ENCODE measurements at regions of chr3 and their contacts with region 1.

Region 1: DNA sequence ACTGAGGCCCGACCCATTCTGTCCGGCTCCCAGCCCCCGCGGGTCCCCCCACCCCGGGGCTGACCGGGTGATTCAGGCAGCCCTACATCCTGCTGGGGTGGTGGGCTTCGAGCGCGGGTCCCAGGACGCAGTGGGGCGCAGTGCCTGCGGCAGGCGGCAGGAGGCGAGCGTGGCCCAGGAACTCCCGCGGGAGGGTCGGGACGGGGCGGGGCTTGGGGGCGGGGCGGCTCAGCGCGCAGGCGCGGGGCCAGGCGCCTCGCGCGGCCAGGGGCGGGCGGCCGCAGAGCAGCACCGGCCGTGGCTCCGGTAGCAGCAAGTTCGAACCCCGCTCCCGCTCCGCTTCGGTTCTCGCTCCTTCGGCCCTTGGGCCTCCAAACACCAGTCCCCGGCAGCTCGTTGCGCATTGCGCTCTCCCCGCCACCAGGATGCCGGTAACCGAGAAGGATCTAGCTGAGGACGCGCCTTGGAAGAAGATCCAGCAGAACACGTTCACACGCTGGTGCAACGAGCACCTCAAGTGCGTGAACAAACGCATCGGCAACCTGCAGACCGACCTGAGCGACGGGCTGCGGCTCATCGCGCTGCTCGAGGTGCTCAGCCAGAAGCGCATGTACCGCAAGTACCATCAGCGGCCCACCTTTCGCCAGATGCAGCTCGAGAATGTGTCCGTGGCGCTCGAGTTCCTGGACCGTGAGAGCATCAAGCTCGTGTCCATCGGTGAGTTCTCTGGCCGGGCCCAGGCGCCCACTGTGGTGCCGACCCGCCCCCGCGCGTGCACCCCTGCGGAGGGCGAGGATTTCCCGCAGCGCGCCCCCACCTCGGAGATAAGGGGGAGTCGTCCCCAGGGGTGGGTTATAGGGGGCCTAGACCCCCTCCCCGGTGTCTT is at the start of gene FLNB:
- DNase-seq: peak; percentile 81
- H3K4me3 Mint-ChIP-seq: peak within 1 kb of the TSS; percentile 92
- H3K27ac Mint-ChIP-seq: peak within 1 kb of the TSS; percentile 74
- H3K4me1 Mint-ChIP-seq: peaks cover 37% of the 10 kb centered on the region
- H3K27me3 Mint-ChIP-seq: no peaks in the 10 kb centered on the region
- total RNA-seq, gene FLNB: 47.7 to 48.0 TPM

Region 2: DNA sequence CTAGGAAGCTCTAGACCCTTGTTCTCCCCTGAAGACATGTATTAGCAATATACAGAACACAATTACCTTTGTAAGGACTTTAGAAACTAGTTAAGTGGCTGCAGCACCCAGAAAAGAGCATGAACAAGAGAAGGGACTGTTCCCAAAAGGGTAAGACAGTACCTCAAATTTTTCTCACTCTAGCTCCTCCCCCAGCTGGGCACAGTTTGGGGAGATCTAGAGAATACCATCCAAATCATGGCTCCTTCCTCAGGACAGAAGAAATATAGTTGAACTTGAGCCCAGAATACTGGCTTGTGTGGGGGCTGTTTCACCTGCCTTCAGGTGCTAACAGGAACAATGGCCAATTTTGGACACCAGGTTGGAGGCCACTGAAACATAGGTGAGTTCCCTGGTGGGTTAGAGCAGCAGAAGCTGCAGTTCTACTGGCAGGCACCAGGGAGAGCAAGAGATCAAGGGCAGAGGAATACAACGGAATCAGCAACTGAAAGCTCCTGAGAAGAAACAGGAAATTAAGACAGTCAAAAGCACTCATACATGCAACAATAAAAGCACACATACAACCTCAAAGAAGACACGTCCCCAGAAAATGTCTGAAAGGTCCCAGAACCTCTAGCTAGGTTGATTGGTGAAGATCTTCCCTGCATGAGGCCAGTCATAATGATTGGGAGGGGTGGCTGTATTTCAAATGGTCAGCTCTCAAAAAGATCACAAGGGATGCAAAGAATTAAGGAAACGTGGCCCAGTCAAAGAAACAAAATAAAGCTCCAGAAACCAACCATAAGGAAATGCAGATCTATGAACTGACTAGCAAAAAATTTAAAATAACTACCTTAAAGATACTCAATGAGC is 611.0 kb before region 1 on chr3:
- CTCF ChIA-PET with region 1: no interaction called
- intact Hi-C with region 1: no loop called
- DNase-seq: peak; percentile 77
- H3K4me3 Mint-ChIP-seq: no peak overlapping the region
- H3K27ac Mint-ChIP-seq: peak overlapping the region; percentile 20
- H3K4me1 Mint-ChIP-seq: peaks cover 11% of the 10 kb centered on the region
- H3K27me3 Mint-ChIP-seq: no peaks in the 10 kb centered on the region

Region 3: GRCh38 chr3:58018892-58019742 is 10.7 kb after region 1 on chr3:
- CTCF ChIA-PET with region 1: interaction called, 15 read pairs
- intact Hi-C with region 1: loop called (anchors 1 kb)
- DNase-seq: no peak
- H3K4me3 Mint-ChIP-seq: no peak overlapping the region
- H3K27ac Mint-ChIP-seq: peak overlapping the region; percentile 8
- H3K4me1 Mint-ChIP-seq: peaks cover 60% of the 10 kb centered on the region
- H3K27me3 Mint-ChIP-seq: no peaks in the 10 kb centered on the region

Region 4: GRCh38 chr3:58073301-58074108 is 65.1 kb after region 1 on chr3:
- CTCF ChIA-PET with region 1: interaction called, 6 read pairs
- intact Hi-C with region 1: loop called (anchors 2 kb)
- DNase-seq: peak; percentile 32
- H3K4me3 Mint-ChIP-seq: no peak overlapping the region
- H3K27ac Mint-ChIP-seq: peak overlapping the region; percentile 44
- H3K4me1 Mint-ChIP-seq: peaks cover 42% of the 10 kb centered on the region
- H3K27me3 Mint-ChIP-seq: no peaks in the 10 kb centered on the region

Region 5: DNA sequence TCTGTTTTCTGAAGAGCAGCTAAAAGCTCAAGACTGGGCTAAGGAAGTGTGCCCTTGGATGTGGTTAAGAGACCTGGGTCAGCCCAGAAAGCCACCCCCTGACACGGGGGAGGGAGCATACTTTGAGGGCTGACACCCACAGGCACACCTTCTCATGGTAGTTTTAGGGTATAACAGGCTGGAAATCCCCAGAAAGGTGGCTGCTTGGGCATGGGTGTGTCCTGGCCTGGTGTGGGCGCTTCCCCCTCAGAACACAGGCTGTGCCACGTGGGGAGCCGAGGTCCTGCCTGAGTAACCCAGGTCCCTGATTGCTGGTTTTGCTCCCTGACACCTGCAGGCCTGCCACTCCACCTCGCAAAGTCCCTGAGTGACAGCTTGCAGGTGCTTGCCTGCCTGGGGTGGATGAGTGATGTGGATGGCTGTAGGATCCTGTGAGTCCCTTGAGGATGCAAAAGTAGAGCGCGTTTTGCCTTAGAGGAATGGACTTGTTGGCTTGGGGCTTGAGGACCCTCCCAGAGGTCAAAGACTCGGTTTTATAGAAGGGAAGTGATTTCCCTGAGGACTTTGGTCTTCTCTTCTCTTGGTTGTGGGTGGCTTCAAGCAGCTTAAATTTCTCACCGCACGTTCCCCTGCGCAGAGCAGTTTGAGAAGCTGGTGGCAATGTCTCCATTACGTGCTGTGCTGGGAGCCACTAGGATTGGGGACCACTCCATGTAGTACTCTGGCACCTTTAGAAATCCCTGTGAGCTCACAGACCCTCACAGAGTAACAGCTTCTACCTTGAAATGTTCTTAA is 108.0 kb after region 1 on chr3:
- CTCF ChIA-PET with region 1: no interaction called
- intact Hi-C with region 1: loop called (anchors 1 kb)
- DNase-seq: peak; percentile 51
- H3K4me3 Mint-ChIP-seq: no peak overlapping the region
- H3K27ac Mint-ChIP-seq: peak overlapping the region; percentile 27
- H3K4me1 Mint-ChIP-seq: peaks cover 26% of the 10 kb centered on the region
- H3K27me3 Mint-ChIP-seq: no peaks in the 10 kb centered on the region

Region 6: DNA sequence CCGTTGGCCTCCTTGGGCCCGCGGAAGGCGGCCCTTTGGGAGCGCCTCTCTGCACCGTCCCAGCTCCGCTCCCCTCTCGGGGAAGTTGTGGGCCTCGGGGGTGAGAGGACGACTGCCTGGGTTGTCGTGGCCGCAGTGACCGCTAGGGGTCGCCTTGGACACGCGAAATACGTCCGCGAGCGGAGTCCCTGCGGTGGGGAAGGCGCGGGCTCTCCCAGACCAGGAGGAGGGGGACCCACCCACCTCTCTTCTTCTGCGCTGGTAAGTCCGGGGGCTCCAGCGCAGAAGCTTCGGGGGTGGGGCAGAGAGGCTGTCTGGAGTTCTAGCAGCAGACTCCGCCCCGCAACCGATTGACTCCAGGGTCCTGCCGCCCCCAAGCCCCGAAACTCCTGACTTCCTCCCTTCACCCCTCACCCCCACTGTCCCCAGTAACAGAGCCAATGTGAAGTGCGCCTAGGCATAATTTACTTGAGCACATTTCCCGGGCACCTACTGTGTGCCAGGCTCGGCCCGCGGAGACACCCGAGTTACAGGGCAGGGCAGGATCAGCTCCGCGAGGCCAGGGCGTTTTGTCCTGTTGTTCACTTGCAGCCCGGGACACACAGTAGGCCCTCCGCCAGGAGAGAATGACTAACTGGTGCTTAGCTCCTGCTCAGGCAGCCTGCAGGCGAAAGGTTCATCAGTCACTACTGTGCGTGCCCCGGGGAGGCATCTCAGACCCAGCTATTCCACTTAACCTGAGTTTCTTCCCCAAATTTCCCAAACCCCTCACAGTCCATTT is 169.6 kb after region 1 on chr3:
- CTCF ChIA-PET with region 1: interaction called, 19 read pairs
- intact Hi-C with region 1: loop called (anchors 1 kb)
- DNase-seq: peak; percentile 95
- H3K4me3 Mint-ChIP-seq: peak overlapping the region; percentile 59
- H3K27ac Mint-ChIP-seq: no peak overlapping the region
- H3K4me1 Mint-ChIP-seq: peaks cover 13% of the 10 kb centered on the region
- H3K27me3 Mint-ChIP-seq: peaks cover 6% of the 10 kb centered on the region

Region 7: DNA sequence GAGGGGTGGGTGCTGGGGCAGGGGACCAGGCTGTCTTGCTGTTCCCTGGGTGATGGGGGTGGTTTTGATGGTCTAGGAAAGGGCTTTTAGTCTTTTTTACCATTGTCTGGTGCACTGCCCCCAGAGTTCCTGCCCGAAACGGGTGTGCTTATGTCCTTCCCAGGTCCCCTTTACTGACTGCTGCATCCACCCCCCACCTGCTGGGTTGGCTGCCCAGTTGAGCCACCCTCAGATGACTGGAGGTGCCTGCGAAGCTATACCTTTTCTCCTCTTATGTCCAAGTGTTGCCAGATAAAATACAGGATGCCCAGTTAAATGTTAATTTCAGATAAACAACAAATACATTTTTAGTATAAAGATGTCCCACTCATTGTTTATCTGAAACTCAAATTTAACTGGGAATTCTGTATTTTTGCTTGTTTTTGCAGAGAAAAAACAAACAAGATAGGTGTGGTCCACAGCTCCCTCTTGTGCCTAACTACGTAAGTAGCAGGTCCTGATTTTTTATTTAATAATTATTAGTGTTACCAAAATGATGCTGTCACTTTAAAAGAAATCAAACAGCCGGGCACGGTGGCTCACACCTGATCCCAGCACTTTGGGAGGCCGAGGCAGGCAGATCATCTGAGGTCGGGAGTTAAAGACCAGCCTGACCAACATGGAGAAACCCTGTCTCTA is 291.6 kb after region 1 on chr3:
- CTCF ChIA-PET with region 1: interaction called, 3 read pairs
- intact Hi-C with region 1: loop called (anchors 1 kb)
- DNase-seq: no peak
- H3K4me3 Mint-ChIP-seq: no peak overlapping the region
- H3K27ac Mint-ChIP-seq: no peak overlapping the region
- H3K4me1 Mint-ChIP-seq: no peaks in the 10 kb centered on the region
- H3K27me3 Mint-ChIP-seq: peaks cover 18% of the 10 kb centered on the region

Region 8: DNA sequence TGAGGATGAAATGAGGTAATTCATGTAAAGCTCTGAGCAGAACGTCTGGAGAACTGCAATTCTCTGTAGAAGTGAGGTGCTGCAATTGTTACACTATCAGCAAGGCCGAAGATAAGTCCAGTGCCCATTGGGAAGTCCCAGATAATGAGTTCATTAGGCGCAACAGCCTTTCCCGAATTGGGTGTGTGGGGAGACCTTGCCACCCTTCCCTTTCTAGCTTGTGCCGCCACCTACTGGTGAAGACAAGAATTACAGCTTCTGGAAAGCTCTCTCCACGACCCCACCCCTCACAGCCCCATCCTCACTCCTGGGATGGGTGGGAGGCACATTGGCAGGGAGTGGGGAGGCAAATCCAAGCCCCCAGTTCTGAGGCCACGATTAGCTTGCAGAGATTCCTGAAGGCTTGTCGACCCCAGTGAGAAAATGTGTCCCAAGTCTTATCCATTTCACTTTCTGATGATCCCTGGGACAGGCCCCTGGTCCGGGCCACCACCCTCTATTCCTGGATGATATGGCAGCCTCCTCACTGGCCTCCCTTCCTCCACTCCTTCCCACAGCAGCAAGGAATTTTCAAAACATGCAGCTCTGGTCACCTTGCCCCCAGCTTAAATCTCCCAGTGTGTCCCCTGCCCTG is 621.8 kb after region 1 on chr3:
- CTCF ChIA-PET with region 1: no interaction called
- intact Hi-C with region 1: no loop called
- DNase-seq: peak; percentile 81
- H3K4me3 Mint-ChIP-seq: no peak overlapping the region
- H3K27ac Mint-ChIP-seq: no peak overlapping the region
- H3K4me1 Mint-ChIP-seq: no peaks in the 10 kb centered on the region
- H3K27me3 Mint-ChIP-seq: no peaks in the 10 kb centered on the region